Ascending aorta (tissue), 2 donors: ENCODE measurements at regions of chr4 and their contacts with region 1.

Region 1: GRCh38 chr4:83261307-83261706 is 23.3 kb downstream of the COQ2 start:
- DNase-seq: no peak
- H3K4me3 ChIP-seq: no peak overlapping the region
- H3K27ac ChIP-seq: no peak overlapping the region
- H3K4me1 ChIP-seq: peaks cover 0 to under 1% of the 10 kb centered on the region in 2 donors
- H3K27me3 ChIP-seq: no peaks in the 10 kb centered on the region
- CTCF ChIP-seq: no peak

Region 2: GRCh38 chr4:83074086-83074704 is 187.1 kb before region 1 on chr4:
- intact Hi-C with region 1: loop called (anchors 5 kb)
- DNase-seq: no peak
- H3K4me3 ChIP-seq: no peak overlapping the region
- H3K27ac ChIP-seq: no peak overlapping the region
- H3K4me1 ChIP-seq: no peaks in the 10 kb centered on the region
- H3K27me3 ChIP-seq: no peaks in the 10 kb centered on the region
- CTCF ChIP-seq: peak; percentile 50 to 68 (median 61)